ENCODE measurements at regions of chr4 and their contacts with region 1.

Region 1: GRCh38 chr4:154551872-154552686 is 1.9 kb upstream of the PLRG1 start:
- DNase-seq: peak; percentile 46
- H3K4me3 Mint-ChIP-seq: no peak overlapping the region
- H3K27ac Mint-ChIP-seq: no peak overlapping the region
- H3K4me1 Mint-ChIP-seq: peaks cover 28% of the 10 kb centered on the region
- H3K27me3 Mint-ChIP-seq: peaks cover 4% of the 10 kb centered on the region

Region 2: DNA sequence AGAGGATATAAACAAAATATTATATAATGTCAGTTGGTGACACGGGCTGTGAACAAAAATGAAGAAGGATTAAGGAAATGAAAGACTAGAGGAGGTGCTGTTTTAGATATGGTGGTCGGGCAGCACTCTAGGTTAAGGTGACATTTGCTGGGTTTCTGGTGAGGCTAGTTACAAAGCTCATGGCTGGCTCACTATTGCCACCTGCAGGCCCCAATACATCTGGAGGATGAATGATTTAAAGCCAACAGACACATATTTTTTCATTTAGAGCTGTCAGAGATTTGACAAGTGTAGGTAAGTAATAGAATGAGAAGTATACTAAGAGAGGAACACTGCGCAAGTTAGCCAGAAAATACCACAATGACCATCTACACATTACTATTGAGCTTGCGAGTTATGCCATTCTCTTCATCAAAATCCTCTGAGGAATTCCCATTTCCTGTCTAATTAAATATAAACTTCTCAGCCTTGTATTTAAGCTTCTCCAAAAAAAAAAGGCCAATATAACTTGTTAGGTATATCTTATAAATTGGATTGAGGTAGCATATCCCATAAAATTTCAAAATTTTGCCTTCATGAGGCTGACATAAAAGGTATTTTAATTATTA is 66.7 kb after region 1 on chr4:
- intact Hi-C with region 1: loop called (anchors 1 kb)
- DNase-seq: peak; percentile 47
- H3K4me3 Mint-ChIP-seq: no peak overlapping the region
- H3K27ac Mint-ChIP-seq: no peak overlapping the region
- H3K4me1 Mint-ChIP-seq: peaks cover 13% of the 10 kb centered on the region
- H3K27me3 Mint-ChIP-seq: peaks cover 12% of the 10 kb centered on the region

Region 3: DNA sequence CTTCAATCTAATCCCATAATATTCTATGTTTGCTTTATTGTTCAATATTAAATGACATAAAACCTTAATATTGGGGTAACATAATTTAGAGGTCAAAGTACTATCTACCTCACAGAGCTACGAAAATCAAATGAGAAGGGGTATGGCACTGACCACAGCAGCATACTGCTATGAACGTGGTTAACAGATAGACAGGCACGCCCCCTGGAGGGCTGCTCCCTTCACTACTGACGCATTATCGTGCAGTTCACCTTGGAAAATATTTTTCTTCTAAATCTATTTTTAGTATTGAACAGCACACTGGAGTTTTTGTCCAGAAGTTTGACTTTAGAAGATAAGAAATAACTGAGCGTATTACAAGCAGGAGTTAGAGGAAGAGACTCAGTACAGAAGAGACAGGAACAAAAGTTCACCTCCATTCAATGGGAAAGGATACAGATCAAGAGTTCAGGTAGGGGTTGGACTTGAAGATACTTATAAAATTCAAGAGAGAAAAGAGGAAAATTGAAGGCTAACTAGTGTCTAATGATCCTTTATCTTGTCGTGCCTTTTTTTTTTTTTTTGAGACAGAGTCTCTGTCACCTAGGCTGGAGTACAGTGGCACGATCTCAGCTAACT is 802.0 kb after region 1 on chr4:
- intact Hi-C with region 1: loop called (anchors 5 kb)
- DNase-seq: no peak
- H3K4me3 Mint-ChIP-seq: no peak overlapping the region
- H3K27ac Mint-ChIP-seq: no peak overlapping the region
- H3K4me1 Mint-ChIP-seq: no peaks in the 10 kb centered on the region
- H3K27me3 Mint-ChIP-seq: no peaks in the 10 kb centered on the region

Region 4: GRCh38 chr4:155376387-155377268 is 824.5 kb after region 1 on chr4 and contains the start of gene MAP9:
- intact Hi-C with region 1: loop called (anchors 1 kb)
- DNase-seq: peak; percentile 82
- H3K4me3 Mint-ChIP-seq: peak within 1 kb of the TSS; percentile 82
- H3K27ac Mint-ChIP-seq: peak within 1 kb of the TSS; percentile 60
- H3K4me1 Mint-ChIP-seq: peaks cover 19% of the 10 kb centered on the region
- H3K27me3 Mint-ChIP-seq: peaks cover 4% of the 10 kb centered on the region
- total RNA-seq, gene MAP9: 5.9 and 6.2 TPM in 2 replicates